ENCODE measurements at regions of chr4 and their contacts with region 1.

Region 1: DNA sequence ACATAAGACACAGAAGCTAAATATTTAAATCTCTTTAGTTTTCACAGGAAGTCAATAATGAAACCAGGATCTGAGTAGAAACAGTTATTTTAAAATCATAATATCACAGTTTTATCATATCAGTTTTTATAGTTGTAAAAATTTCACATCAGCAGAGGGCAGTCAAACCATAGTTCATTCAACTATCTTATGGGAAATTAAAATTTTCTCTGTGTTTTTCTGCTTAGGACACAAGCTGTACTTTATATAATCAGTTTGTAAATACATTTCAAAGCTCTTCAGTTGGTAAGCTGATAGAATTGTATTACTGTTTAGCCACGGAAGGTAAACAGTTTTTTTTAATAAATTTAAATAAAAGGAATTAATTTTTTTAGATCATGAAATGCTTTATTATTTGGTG is 204.8 kb upstream of the NUDT6 start:
- DNase-seq: peak; percentile 37
- ATAC-seq: no peak
- H3K4me3 ChIP-seq: no peak overlapping the region
- H3K27ac ChIP-seq: no peak overlapping the region
- H3K4me1 ChIP-seq: peaks cover 7% of the 10 kb centered on the region
- H3K27me3 ChIP-seq: no peaks in the 10 kb centered on the region
- CTCF ChIP-seq: peak; percentile 54

Region 2: GRCh38 chr4:123102897-123103471 is 24.2 kb before region 1 on chr4:
- CTCF ChIA-PET with region 1: no interaction called
- POLR2A ChIA-PET with region 1: no interaction called
- intact Hi-C with region 1: loop called (anchors 1 kb)
- DNase-seq: peak; percentile 54
- ATAC-seq: peak; percentile 54; the same call in 1 of the 2 replicates
- H3K4me3 ChIP-seq: no peak overlapping the region
- H3K27ac ChIP-seq: no peak overlapping the region
- H3K4me1 ChIP-seq: no peaks in the 10 kb centered on the region
- H3K27me3 ChIP-seq: no peaks in the 10 kb centered on the region
- CTCF ChIP-seq: peak; percentile 82

Region 3: DNA sequence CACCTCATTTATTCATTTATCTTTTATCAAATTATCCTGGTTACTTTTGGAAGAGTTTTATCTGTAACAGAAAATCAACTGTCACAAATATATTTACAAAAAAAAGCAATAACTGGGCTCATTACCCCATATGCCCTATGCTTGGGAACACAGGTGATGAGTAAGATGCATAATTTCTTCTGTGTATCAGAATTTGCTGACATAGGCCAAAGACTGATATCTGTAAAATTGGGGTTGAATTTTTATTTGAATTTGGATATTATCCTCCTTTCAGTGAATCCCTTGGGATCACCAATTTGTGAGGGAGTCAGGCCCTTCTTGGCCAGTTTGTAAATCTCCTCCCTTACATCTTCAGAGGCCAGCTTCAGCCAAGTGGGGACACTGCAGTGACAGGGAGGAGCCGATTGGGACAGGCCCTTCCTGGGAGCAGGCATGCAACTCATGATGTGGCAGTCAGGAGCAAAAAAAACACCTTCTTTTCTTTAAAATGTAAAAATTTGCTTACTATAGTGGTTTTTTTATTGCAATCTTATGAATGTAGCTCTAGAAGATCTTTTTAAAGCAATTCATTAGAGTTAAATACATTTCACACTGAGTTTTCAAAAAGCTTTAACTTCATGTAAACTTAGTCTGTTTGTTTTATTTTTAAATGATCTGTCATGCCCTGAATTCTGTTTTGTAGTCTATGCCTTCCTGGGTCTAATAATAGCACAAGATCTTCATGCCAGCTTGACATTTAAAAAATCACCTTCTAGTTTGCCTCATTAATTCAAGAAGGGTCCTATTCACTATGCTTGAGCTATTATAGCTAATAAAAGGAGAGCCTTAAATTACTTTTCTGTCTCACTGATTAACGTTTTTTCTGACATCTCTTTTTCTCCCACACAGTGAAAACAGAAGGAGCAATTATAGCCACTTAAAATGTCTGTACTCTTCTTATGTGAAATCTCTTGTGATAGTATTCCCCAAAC is 132.7 kb after region 1 on chr4:
- CTCF ChIA-PET with region 1: no interaction called
- POLR2A ChIA-PET with region 1: no interaction called
- intact Hi-C with region 1: no loop called
- DNase-seq: no peak
- ATAC-seq: no peak
- H3K4me3 ChIP-seq: no peak overlapping the region
- H3K27ac ChIP-seq: no peak overlapping the region
- H3K4me1 ChIP-seq: 0 out of 2 replicates have a peak, but pooled peaks cover 1% of the 10 kb centered on the region
- H3K27me3 ChIP-seq: no peaks in the 10 kb centered on the region
- CTCF ChIP-seq: no peak

Region 4: DNA sequence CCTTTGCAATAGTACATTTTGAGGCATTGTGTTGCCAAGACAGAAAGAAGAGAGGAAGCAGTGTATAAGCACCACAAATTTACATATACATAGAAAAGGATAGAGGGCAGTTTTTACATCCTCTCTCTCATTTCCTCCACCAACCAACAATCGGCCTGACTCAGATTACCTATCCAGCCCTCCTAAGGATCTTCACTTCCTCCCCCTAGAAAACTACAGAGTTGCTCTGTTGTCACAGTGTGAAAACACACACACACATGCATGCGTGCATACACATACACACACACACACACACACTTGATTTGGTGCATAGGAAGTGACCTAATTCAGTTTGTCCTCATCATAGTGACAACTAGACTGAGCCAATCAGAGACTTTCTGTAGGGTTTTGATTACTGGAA is 170.6 kb after region 1 on chr4:
- CTCF ChIA-PET with region 1: no interaction called
- POLR2A ChIA-PET with region 1: no interaction called
- intact Hi-C with region 1: no loop called
- DNase-seq: no peak
- ATAC-seq: no peak
- H3K4me3 ChIP-seq: no peak overlapping the region
- H3K27ac ChIP-seq: no peak overlapping the region
- H3K4me1 ChIP-seq: peaks cover 15% of the 10 kb centered on the region
- H3K27me3 ChIP-seq: no peaks in the 10 kb centered on the region
- CTCF ChIP-seq: no peak

Region 5: DNA sequence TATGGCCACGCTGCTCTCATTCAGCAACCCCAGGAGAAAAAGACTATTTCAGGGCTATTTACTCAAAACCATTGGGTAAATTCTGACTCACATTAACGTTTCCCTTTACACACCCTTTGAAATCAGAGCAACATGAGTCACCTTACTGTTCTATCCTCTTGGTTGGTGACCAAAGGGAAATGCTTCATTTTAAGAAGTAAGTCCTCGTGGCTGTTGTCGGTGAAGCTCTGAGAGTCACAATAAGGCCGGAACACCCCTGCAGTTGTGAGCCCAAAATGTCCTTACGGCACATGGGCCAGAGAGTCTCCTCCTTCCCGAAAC is 213.1 kb after region 1 on chr4:
- CTCF ChIA-PET with region 1: no interaction called
- POLR2A ChIA-PET with region 1: no interaction called
- intact Hi-C with region 1: loop called (anchors 5 kb)
- DNase-seq: peak; percentile 91
- ATAC-seq: peak; percentile 95
- H3K4me3 ChIP-seq: no peak overlapping the region
- H3K27ac ChIP-seq: peak overlapping the region; percentile 89
- H3K4me1 ChIP-seq: peaks cover 18% of the 10 kb centered on the region
- H3K27me3 ChIP-seq: no peaks in the 10 kb centered on the region
- CTCF ChIP-seq: no peak

Region 6: DNA sequence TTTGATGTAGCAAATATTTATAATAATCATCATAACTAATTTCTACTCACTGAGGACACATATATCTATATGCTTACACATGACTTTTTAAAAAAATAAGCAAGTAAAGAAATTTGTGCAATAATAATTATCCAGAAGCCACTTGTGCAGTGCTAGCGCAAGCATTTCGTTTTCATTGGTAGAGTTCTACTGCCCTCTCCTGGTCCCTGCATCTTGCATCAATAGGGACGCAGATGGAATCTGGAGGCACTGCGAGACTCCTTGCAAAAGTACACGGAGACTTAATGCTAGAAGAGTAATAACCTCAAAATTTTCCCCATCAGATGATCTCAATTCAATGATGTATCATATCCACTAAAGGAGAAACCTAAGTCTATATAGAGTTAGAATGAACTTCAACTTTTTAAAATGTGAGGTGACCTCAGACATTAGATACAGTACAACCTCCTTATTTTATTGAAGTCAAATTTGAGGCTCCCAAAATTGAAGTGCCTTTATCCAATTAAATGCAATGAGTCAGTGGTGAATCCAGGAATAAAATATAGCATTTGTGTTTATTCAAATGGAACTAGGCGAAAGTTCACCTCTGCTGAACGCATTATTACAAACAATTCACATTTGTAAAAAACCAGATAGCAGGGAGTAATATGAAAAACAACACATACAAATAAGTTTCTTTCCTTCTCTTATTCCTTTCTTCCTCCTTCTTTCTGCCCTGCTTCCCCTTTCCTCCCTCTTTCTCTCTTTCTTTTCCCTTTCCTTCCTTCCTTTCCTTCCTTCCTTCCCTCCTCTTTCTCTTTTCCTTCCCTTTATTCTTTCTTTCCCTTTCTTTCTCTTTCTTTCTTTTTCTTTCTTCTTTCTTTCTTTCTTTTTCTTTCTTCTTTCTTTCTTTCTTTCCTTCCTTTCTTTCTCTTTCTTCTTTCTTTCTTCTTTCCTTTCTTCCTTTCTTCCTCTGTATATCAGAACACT is 1135.3 kb after region 1 on chr4:
- CTCF ChIA-PET with region 1: no interaction called
- POLR2A ChIA-PET with region 1: no interaction called
- intact Hi-C with region 1: loop called (anchors 10 kb)
- DNase-seq: peak; percentile 87
- ATAC-seq: peak; percentile 98
- H3K4me3 ChIP-seq: no peak overlapping the region; the same call in 1 of the 2 replicates
- H3K27ac ChIP-seq: no peak overlapping the region
- H3K4me1 ChIP-seq: peaks cover 8% of the 10 kb centered on the region
- H3K27me3 ChIP-seq: no peaks in the 10 kb centered on the region
- CTCF ChIP-seq: peak; percentile 87